ENCODE measurements at regions of chr11 and their contacts with region 1.

Region 1: GRCh38 chr11:126561327-126561893 is 205.9 kb downstream of the ST3GAL4 start:
- DNase-seq: peak; percentile 41
- H3K4me3 ChIP-seq: no peak overlapping the region
- H3K27ac ChIP-seq: no peak overlapping the region
- H3K4me1 ChIP-seq: no peaks in the 10 kb centered on the region
- H3K27me3 ChIP-seq: no peaks in the 10 kb centered on the region
- CTCF ChIP-seq: no peak

Region 2: GRCh38 chr11:126669416-126669815 is 108.0 kb after region 1 on chr11:
- CTCF ChIA-PET with region 1: no interaction called
- dilution Hi-C with region 1: loop called (anchors 5 kb)
- in situ Hi-C with region 1: no loop called
- intact Hi-C with region 1: no loop called
- DNase-seq: no peak
- H3K4me3 ChIP-seq: no peak overlapping the region
- H3K27ac ChIP-seq: no peak overlapping the region
- H3K4me1 ChIP-seq: no peaks in the 10 kb centered on the region
- H3K27me3 ChIP-seq: peaks cover 5% of the 10 kb centered on the region
- CTCF ChIP-seq: no peak